ENCODE measurements at regions of chr10 and their contacts with region 1.

Region 1: GRCh38 chr10:4849555-4850242 is 23.7 kb downstream of the AKR1E2 start:
- DNase-seq: peak; percentile 74 to 85 (median 82)
- ATAC-seq: peak; percentile 94
- H3K4me3 ChIP-seq: no peak overlapping the region
- H3K4me3 Mint-ChIP-seq: peak overlapping the region in 2 of 10 donors; percentile 21 to 51
- H3K27ac ChIP-seq: no peak overlapping the region
- H3K27ac Mint-ChIP-seq: peak overlapping the region in 6 of 9 donors; percentile 21 to 65 (median 46)
- H3K4me1 ChIP-seq: no peaks in the 10 kb centered on the region
- H3K4me1 Mint-ChIP-seq: peaks cover 0 to 12% (median 7%) of the 10 kb centered on the region in 7 donors
- H3K27me3 ChIP-seq: no peaks in the 10 kb centered on the region
- H3K27me3 Mint-ChIP-seq: no peaks in the 10 kb centered on the region

Region 2: GRCh38 chr10:4839401-4839800 is 10.3 kb before region 1 on chr10:
- CTCF ChIA-PET with region 1: interaction called, 63 read pairs
- POLR2A ChIA-PET with region 1: interaction called, 3 read pairs
- intact Hi-C with region 1: no loop called
- DNase-seq: no peak
- ATAC-seq: no peak
- H3K4me3 ChIP-seq: no peak overlapping the region
- H3K4me3 Mint-ChIP-seq: no peak overlapping the region
- H3K27ac ChIP-seq: no peak overlapping the region
- H3K27ac Mint-ChIP-seq: peak overlapping the region in 7 of 9 donors; percentile 9 to 71 (median 16)
- H3K4me1 ChIP-seq: peaks cover 0 to 36% of the 10 kb centered on the region in 2 donors
- H3K4me1 Mint-ChIP-seq: peaks cover 17 to 48% (median 30%) of the 10 kb centered on the region in 7 donors
- H3K27me3 ChIP-seq: no peaks in the 10 kb centered on the region
- H3K27me3 Mint-ChIP-seq: peaks cover 0 to 3% (median 0%) of the 10 kb centered on the region in 5 donors

Region 3: DNA sequence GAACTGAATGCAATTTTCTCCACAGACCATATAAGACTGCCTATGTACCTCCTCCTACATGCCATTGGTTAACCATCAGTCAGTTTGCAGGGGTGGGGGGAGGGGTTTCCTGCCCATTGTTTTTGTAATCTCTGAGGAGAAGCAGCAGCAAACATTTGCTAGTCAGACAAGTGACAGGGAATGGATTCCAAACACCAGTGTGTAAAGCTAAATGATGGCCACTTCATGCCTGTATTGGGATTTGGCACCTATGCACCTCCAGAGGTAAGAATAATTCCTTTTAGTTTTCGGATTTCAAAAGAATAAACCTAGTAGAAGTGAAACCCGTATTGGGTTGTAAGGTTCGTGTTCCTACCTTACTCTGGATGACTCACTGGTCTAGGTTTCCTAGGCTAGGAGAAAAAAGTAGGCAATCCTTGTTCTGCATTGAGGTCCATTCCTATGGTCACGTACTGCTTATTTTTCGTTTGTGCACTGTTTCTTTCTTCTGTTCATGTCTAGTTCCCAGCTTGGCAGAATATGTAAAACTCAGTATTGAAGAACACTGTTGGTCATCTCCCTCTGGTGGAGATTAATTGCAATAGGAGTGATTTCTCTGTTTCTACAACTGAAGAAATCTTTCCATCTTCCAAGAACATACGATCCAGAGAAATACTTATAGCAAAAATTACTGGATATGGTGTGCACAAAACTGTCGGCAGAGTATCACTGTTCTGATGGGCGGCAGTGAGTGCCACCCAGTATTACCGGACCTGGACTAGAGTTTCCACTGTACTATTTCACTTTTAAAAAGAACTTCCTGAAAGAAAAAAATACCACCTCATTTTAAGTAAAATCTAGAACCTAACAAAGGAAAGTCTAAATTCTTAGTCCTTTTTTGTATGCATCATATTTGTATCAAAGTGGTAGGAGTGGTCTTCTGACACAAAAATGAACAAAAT is 244.8 kb after region 1 on chr10 and contains the start of gene AKR1C3:
- CTCF ChIA-PET with region 1: interaction called, 7 read pairs
- POLR2A ChIA-PET with region 1: no interaction called
- intact Hi-C with region 1: loop called (anchors 1 to 5 kb)
- DNase-seq: peak in 6 of 9 donors; percentile 24 to 53 (median 36)
- ATAC-seq: peak; percentile 77
- H3K4me3 ChIP-seq: peak within 1 kb of the TSS; percentile 69
- H3K4me3 Mint-ChIP-seq: peak within 1 kb of the TSS; percentile 71 to 95 (median 91)
- H3K27ac ChIP-seq: no peak within 1 kb of the TSS
- H3K27ac Mint-ChIP-seq: peak within 1 kb of the TSS in 6 of 9 donors; percentile 35 to 90 (median 61)
- H3K4me1 ChIP-seq: no peaks in the 10 kb centered on the region
- H3K4me1 Mint-ChIP-seq: peaks cover 0 to 25% (median 15%) of the 10 kb centered on the region in 7 donors
- H3K27me3 ChIP-seq: no peaks in the 10 kb centered on the region
- H3K27me3 Mint-ChIP-seq: peaks cover 0 to 44% (median 13%) of the 10 kb centered on the region in 5 donors
- total RNA-seq, gene AKR1C3: 2.9 to 14.1 (median 5.8) TPM

Region 4: DNA sequence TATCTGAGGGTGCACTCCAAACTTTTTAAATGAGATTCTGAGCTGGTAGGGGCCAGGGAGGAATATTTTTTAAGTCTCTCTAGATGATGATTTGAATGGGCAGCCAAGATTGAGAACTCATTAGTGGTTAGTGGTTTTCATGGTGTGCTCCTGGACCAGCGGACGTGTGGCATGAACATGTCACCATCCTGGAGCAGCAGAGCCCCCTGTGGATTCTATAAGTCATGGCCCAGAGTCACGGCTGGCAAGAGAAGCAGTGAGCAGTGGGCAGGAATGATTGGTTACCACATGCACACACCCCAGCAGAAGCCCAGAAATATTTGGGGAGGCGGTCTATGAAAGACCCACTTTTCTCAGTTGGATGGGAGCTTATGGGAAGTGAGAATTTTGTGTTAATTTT is 493.9 kb after region 1 on chr10:
- CTCF ChIA-PET with region 1: interaction called, 7 read pairs
- POLR2A ChIA-PET with region 1: no interaction called
- intact Hi-C with region 1: loop called in 1 of 2 experiments (anchors 1 kb)
- DNase-seq: peak in 3 of 9 donors; percentile 5 to 18 (median 12)
- ATAC-seq: peak; percentile 44
- H3K4me3 ChIP-seq: no peak overlapping the region
- H3K4me3 Mint-ChIP-seq: no peak overlapping the region
- H3K27ac ChIP-seq: no peak overlapping the region
- H3K27ac Mint-ChIP-seq: no peak overlapping the region
- H3K4me1 ChIP-seq: no peaks in the 10 kb centered on the region
- H3K4me1 Mint-ChIP-seq: peaks cover 0 to 7% (median 4%) of the 10 kb centered on the region in 7 donors
- H3K27me3 ChIP-seq: no peaks in the 10 kb centered on the region
- H3K27me3 Mint-ChIP-seq: peaks cover 0 to 11% (median 0%) of the 10 kb centered on the region in 5 donors

Region 5: GRCh38 chr10:5434017-5434753 is 584.5 kb after region 1 on chr10:
- CTCF ChIA-PET with region 1: interaction called, 86 read pairs
- POLR2A ChIA-PET with region 1: interaction called, 3 read pairs
- intact Hi-C with region 1: loop called (anchors 1 kb)
- DNase-seq: peak in 5 of 9 donors; percentile 31 to 54 (median 38)
- ATAC-seq: peak; percentile 84
- H3K4me3 ChIP-seq: no peak overlapping the region
- H3K4me3 Mint-ChIP-seq: peak overlapping the region in 3 of 10 donors; percentile 8 to 25 (median 10)
- H3K27ac ChIP-seq: no peak overlapping the region
- H3K27ac Mint-ChIP-seq: peak overlapping the region in 4 of 9 donors; percentile 49 to 81 (median 56)
- H3K4me1 ChIP-seq: peaks cover 0 to 10% of the 10 kb centered on the region in 2 donors
- H3K4me1 Mint-ChIP-seq: peaks cover 4 to 15% (median 11%) of the 10 kb centered on the region in 7 donors
- H3K27me3 ChIP-seq: peaks cover 0 to 3% of the 10 kb centered on the region in 2 donors
- H3K27me3 Mint-ChIP-seq: no peaks in the 10 kb centered on the region

Region 6: DNA sequence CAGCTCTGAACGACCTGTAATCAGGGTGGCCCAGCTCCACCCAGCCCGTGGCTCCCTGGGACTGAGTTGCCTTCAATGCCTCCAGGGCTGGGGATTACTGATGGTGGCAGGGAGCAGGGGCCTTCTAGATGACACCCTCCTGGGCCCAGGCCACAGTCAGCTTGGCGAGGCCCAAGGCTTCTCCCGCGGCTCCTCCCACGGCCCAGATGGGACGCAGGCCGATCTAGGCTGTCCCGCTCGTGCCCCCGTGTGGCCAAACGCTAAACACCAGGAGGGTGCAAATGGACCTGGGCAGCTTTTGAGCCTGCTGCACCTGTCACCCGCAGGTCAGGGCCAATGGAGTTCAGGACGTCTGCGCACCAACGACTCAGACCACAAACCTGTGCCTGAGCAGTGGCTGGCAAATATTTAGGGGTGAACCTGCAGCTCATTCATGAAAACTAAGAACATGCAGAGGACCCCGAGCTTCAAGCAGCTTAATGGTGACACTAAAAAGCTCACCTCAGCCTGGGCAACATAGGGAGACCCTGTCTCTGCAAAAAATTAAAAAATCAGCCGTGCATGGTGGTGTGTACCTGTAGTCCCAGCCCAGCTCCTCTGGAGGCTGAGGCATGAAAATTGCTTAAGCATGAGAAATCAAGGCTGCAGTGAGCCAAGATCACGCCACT is 773.5 kb after region 1 on chr10:
- CTCF ChIA-PET with region 1: interaction called, 18 read pairs
- POLR2A ChIA-PET with region 1: no interaction called
- intact Hi-C with region 1: loop called (anchors 1 kb)
- DNase-seq: peak; percentile 62 to 82 (median 70)
- ATAC-seq: peak; percentile 96
- H3K4me3 ChIP-seq: no peak overlapping the region
- H3K4me3 Mint-ChIP-seq: peak overlapping the region in 1 of 10 donors; percentile 32
- H3K27ac ChIP-seq: no peak overlapping the region
- H3K27ac Mint-ChIP-seq: peak overlapping the region in 1 of 9 donors; percentile 41
- H3K4me1 ChIP-seq: no peaks in the 10 kb centered on the region
- H3K4me1 Mint-ChIP-seq: peaks cover 0 to 4% (median 0%) of the 10 kb centered on the region in 7 donors
- H3K27me3 ChIP-seq: no peaks in the 10 kb centered on the region
- H3K27me3 Mint-ChIP-seq: peaks cover 0 to 4% (median 0%) of the 10 kb centered on the region in 5 donors

Measured in naive thymus-derived CD4-positive, alpha-beta T cell (primary cell).